ENCODE measurements at regions of chr4 and their contacts with region 1.

Region 1: DNA sequence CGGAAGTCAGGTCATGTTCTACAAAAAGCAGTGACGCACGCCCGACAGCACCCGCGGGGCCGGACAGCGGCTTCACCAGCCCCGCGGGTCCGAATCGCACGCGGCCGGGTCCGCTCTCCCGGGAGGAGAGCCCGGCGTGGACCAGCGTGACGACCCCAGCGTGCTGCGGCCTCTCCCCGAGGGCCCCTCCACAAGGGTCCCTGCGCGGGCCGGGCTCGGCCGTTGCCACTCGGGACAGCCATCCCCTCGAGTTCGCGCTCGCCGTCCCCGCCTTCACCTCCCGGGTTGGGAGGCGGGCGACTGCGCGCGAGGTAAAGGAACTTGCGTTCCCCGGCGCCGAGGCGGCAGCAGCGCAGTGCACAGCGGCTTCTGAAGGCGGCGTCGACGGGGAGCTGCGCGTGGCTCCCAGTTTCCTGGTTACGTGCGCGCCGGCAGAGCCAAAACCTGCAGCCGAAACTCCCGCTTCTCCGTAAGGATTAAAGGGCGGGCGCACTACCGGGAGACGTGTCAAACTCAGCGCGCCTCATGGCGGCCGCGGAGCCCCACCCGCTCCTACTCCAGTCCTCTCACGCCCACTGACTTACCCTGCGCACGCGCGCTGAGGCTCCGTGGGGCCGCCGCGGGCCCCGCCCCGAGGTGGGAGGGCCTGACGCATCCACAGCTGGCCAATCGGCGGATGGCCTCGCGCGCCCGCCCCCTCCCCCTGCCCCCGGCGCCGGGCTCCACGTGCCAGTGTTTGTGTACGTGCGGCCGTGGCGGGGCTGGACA is 416 bp upstream of the LRP2BP start:
- DNase-seq: peak; percentile 94 to 98 (median 96)
- ATAC-seq: peak; percentile 89 to 90
- H3K4me3 Mint-ChIP-seq: peak overlapping the region; percentile 83 to 98 (median 96)
- H3K27ac Mint-ChIP-seq: peak overlapping the region; percentile 94 to 99 (median 98)
- H3K4me1 Mint-ChIP-seq: peaks cover 10 to 30% (median 26%) of the 10 kb centered on the region in 4 donors
- H3K27me3 Mint-ChIP-seq: no peaks in the 10 kb centered on the region

Region 2: GRCh38 chr4:185384930-185385331 is 11.2 kb before region 1 on chr4:
- POLR2A ChIA-PET with region 1: interaction called, 11 read pairs
- DNase-seq: no peak
- ATAC-seq: no peak
- H3K4me3 Mint-ChIP-seq: peak overlapping the region in 7 of 10 donors; percentile 25 to 48 (median 38)
- H3K27ac Mint-ChIP-seq: peak overlapping the region in 1 of 10 donors; percentile 24
- H3K4me1 Mint-ChIP-seq: peaks cover 2 to 12% (median 11%) of the 10 kb centered on the region in 4 donors
- H3K27me3 Mint-ChIP-seq: peaks cover 4 to 25% (median 7%) of the 10 kb centered on the region in 5 donors

Region 3: DNA sequence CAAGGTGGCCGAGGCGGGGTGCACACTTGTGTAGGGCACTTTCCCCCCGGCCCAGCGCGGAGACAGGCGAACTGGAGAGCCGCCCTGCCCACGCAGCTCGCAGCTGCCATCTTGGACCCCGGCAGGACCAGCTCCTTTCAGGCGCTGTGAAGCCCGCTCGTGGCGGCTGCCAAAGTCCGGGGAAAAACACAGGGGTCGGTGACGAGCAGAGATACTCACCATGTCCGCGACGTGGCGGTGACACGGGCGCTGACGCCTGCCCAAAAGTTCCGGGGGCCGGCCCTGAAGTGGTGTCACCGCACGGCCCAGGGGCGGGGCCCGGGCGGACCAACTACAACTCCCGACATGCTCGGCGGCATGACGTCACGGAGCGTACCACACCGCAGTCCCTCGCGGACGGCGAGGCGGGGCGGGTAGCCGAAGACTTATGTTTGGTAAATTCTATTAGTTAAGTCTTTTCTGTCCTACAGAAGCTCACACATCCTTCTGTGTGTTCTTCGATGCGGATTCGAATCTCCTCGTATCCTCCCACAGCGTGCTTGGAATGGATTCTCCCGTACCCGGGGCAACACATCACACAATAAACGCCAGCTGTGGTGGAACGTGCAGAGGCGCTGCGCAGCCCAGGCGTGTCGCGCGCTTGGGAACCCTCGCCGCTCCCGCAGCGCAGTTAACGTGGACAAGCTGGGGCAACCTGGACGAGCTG is 29.7 kb after region 1 on chr4 and contains the start of gene UFSP2:
- POLR2A ChIA-PET with region 1: interaction called, 45 read pairs
- DNase-seq: peak; percentile 79 to 98 (median 90)
- ATAC-seq: peak; percentile 86 to 87
- H3K4me3 Mint-ChIP-seq: peak within 1 kb of the TSS; percentile 82 to 94 (median 90)
- H3K27ac Mint-ChIP-seq: peak within 1 kb of the TSS; percentile 95 to 100 (median 100)
- H3K4me1 Mint-ChIP-seq: peaks cover 22 to 39% (median 35%) of the 10 kb centered on the region in 4 donors
- H3K27me3 Mint-ChIP-seq: peaks cover 0 to 5% (median 0%) of the 10 kb centered on the region in 5 donors
- polyA plus RNA-seq, gene UFSP2: 34.7 to 53.9 (median 45.2) TPM